CD14-positive monocyte (primary cell): ENCODE measurements at regions of chr6 and their contacts with region 1.

Region 1: GRCh38 chr6:53348371-53349208 is at the start of gene ELOVL5:
- DNase-seq: peak; percentile 98 to 100 (median 99)
- H3K4me3 ChIP-seq: peak within 1 kb of the TSS; percentile 88 to 93 (median 89)
- H3K4me3 Mint-ChIP-seq: peak within 1 kb of the TSS; percentile 93 to 97
- H3K27ac ChIP-seq: peak within 1 kb of the TSS; percentile 82 to 91
- H3K27ac Mint-ChIP-seq: peak within 1 kb of the TSS; percentile 93 to 97 (median 94)
- H3K4me1 ChIP-seq: peaks cover 15 to 32% of the 10 kb centered on the region in 2 donors
- H3K4me1 Mint-ChIP-seq: peaks cover 43% of the 10 kb centered on the region
- H3K27me3 ChIP-seq: no peaks in the 10 kb centered on the region
- H3K27me3 Mint-ChIP-seq: peaks cover 3 to 7% (median 5%) of the 10 kb centered on the region in 3 donors
- CTCF ChIP-seq: no peak
- polyA plus RNA-seq, gene ELOVL5: 44.7 to 97.1 (median 69.5) TPM

Region 2: GRCh38 chr6:53171605-53172446 is 176.8 kb before region 1 on chr6:
- intact Hi-C with region 1: loop called in 1 of 2 experiments (anchors 10 kb)
- DNase-seq: peak; percentile 84 to 88 (median 86)
- H3K4me3 ChIP-seq: no peak overlapping the region
- H3K4me3 Mint-ChIP-seq: no peak overlapping the region
- H3K27ac ChIP-seq: no peak overlapping the region
- H3K27ac Mint-ChIP-seq: peak overlapping the region in 2 of 7 donors; percentile 52 to 74
- H3K4me1 ChIP-seq: no peaks in the 10 kb centered on the region
- H3K4me1 Mint-ChIP-seq: peaks cover 9% of the 10 kb centered on the region
- H3K27me3 ChIP-seq: no peaks in the 10 kb centered on the region
- H3K27me3 Mint-ChIP-seq: peaks cover 0 to 2% (median 0%) of the 10 kb centered on the region in 3 donors
- CTCF ChIP-seq: peak; percentile 100

Region 3: DNA sequence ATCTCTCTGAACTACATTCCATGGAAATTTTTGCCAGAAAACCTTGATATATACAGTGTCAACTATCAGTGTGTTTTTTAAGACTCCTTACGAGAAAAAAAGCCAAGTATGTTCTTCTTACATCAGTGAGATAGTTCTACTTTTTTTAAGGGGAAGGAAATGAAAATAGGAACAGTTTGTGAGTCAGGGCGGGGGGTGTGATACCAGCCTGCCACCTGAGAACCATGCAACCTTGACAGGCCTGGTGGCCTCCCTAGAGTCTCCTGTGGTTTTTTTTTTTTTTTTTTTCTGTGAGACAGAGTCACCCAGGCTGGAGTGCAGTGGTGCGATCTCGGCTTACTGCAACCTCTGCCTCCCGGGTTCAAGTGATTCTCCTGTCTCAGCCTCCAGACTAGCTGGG is 103.6 kb before region 1 on chr6:
- intact Hi-C with region 1: loop called in 1 of 2 experiments (anchors 10 kb)
- DNase-seq: peak; percentile 84 to 88 (median 87)
- H3K4me3 ChIP-seq: peak overlapping the region in 1 of 3 experiments; percentile 44
- H3K4me3 Mint-ChIP-seq: peak overlapping the region in 1 of 2 donors; percentile 53
- H3K27ac ChIP-seq: peak overlapping the region; percentile 79 to 86
- H3K27ac Mint-ChIP-seq: peak overlapping the region; percentile 87 to 97 (median 94)
- H3K4me1 ChIP-seq: peaks cover 57 to 60% of the 10 kb centered on the region in 2 donors
- H3K4me1 Mint-ChIP-seq: peaks cover 72% of the 10 kb centered on the region
- H3K27me3 ChIP-seq: no peaks in the 10 kb centered on the region
- H3K27me3 Mint-ChIP-seq: peaks cover 0 to 2% (median 1%) of the 10 kb centered on the region in 3 donors
- CTCF ChIP-seq: no peak

Region 4: GRCh38 chr6:53437557-53438202 is 89.1 kb after region 1 on chr6:
- intact Hi-C with region 1: loop called in 1 of 2 experiments (anchors 5 kb)
- DNase-seq: peak; percentile 38 to 77 (median 73)
- H3K4me3 ChIP-seq: no peak overlapping the region
- H3K4me3 Mint-ChIP-seq: no peak overlapping the region
- H3K27ac ChIP-seq: peak overlapping the region in 1 of 2 donors; percentile 69
- H3K27ac Mint-ChIP-seq: peak overlapping the region; percentile 25 to 92 (median 53)
- H3K4me1 ChIP-seq: peaks cover 46 to 55% of the 10 kb centered on the region in 2 donors
- H3K4me1 Mint-ChIP-seq: peaks cover 52% of the 10 kb centered on the region
- H3K27me3 ChIP-seq: no peaks in the 10 kb centered on the region
- H3K27me3 Mint-ChIP-seq: peaks cover 0 to 1% (median 0%) of the 10 kb centered on the region in 3 donors
- CTCF ChIP-seq: peak; percentile 67

Region 5: GRCh38 chr6:53484476-53485280 is 136.1 kb after region 1 on chr6:
- intact Hi-C with region 1: loop called in 1 of 2 experiments (anchors 5 kb)
- DNase-seq: peak; percentile 60 to 77 (median 68)
- H3K4me3 ChIP-seq: no peak overlapping the region
- H3K4me3 Mint-ChIP-seq: peak overlapping the region in 1 of 2 donors; percentile 67
- H3K27ac ChIP-seq: no peak overlapping the region
- H3K27ac Mint-ChIP-seq: no peak overlapping the region
- H3K4me1 ChIP-seq: peaks cover 31 to 37% of the 10 kb centered on the region in 2 donors
- H3K4me1 Mint-ChIP-seq: peaks cover 40% of the 10 kb centered on the region
- H3K27me3 ChIP-seq: peaks cover 0 to 3% of the 10 kb centered on the region in 2 donors
- H3K27me3 Mint-ChIP-seq: peaks cover 3 to 13% (median 9%) of the 10 kb centered on the region in 3 donors
- CTCF ChIP-seq: peak; percentile 97

Region 6: DNA sequence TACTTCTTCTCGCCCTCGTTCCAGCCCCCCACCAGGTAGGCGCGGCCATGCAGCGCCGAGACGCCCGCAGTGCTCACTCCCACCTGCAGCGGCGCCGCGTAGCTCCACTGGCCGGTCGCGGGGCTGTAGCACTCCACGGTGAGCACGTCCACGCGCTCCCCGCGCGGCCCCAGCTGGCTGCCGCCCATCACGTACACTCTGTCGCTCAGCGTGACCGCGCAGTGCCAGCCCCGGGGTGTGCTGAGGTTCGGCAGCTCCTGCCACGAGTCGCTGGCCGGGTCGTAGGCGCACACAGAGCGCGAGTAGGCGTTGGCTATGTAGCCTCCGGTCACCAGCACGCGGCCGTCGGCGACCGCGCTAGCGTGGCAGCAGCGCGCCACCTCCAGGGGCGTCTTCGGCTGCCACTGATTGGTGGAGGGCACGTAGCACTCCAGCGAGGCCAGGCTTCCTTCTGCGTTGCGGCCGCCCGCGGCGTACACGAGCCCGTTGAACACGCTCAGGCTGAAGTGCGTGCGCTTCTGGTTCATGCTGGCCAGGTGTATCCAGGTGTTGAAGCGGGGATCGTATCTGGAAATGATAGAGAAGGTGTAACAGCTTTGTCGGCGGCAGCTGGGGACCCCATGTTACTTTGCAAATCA is 303.3 kb after region 1 on chr6:
- intact Hi-C with region 1: loop called in 1 of 2 experiments (anchors 10 kb)
- DNase-seq: peak; percentile 74 to 80 (median 78)
- H3K4me3 ChIP-seq: peak overlapping the region; percentile 49 to 81 (median 58)
- H3K4me3 Mint-ChIP-seq: peak overlapping the region; percentile 81 to 91
- H3K27ac ChIP-seq: peak overlapping the region in 1 of 2 donors; percentile 49
- H3K27ac Mint-ChIP-seq: peak overlapping the region in 5 of 7 donors; percentile 30 to 86 (median 64)
- H3K4me1 ChIP-seq: peaks cover 26 to 31% of the 10 kb centered on the region in 2 donors
- H3K4me1 Mint-ChIP-seq: peaks cover 29% of the 10 kb centered on the region
- H3K27me3 ChIP-seq: peaks cover 4 to 11% of the 10 kb centered on the region in 2 donors
- H3K27me3 Mint-ChIP-seq: peaks cover 3 to 12% (median 7%) of the 10 kb centered on the region in 3 donors
- CTCF ChIP-seq: no peak